Heart right ventricle (tissue), 16 donors: ENCODE measurements at regions of chr1 and their contacts with region 1.

Region 1: DNA sequence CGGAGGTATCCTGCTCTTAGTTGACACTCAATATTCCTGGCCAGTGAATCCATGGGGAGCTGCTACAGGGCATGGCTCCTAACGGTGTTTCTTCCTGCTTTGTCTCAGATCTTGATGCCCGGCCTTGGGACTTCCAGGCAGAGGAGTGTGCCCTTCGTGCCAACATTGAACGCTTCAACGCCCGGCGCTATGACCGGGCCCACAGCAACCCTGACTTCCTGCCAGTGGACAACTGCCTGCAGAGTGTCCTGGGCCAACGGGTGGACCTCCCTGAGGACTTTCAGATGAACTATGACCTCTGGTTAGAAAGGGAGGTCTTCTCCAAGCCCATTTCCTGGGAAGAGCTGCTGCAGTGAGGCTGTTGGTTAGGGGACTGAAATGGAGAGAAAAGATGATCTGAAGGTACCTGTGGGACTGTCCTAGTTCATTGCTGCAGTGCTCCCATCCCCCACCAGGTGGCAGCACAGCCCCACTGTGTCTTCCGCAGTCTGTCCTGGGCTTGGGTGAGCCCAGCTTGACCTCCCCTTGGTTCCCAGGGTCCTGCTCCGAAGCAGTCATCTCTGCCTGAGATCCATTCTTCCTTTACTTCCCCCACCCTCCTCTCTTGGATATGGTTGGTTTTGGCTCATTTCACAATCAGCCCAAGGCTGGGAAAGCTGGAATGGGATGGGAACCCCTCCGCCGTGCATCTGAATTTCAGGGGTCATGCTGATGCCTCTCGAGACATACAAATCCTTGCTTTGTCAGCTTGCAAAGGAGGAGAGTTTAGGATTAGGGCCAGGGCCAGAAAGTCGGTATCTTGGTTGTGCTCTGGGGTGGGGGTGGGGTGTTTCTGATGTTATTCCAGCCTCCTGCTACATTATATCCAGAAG is 16.7 kb downstream of the ALX3 start:
- DNase-seq: peak; percentile 62 to 75
- ATAC-seq: peak; percentile 57 to 82 (median 76)
- H3K4me3 ChIP-seq: no peak overlapping the region
- H3K27ac ChIP-seq: no peak overlapping the region
- H3K4me1 ChIP-seq: peaks cover 0 to 48% (median 19%) of the 10 kb centered on the region in 9 donors
- H3K27me3 ChIP-seq: no peaks in the 10 kb centered on the region
- CTCF ChIP-seq: peak; percentile 92 to 98 (median 96)

Region 2: DNA sequence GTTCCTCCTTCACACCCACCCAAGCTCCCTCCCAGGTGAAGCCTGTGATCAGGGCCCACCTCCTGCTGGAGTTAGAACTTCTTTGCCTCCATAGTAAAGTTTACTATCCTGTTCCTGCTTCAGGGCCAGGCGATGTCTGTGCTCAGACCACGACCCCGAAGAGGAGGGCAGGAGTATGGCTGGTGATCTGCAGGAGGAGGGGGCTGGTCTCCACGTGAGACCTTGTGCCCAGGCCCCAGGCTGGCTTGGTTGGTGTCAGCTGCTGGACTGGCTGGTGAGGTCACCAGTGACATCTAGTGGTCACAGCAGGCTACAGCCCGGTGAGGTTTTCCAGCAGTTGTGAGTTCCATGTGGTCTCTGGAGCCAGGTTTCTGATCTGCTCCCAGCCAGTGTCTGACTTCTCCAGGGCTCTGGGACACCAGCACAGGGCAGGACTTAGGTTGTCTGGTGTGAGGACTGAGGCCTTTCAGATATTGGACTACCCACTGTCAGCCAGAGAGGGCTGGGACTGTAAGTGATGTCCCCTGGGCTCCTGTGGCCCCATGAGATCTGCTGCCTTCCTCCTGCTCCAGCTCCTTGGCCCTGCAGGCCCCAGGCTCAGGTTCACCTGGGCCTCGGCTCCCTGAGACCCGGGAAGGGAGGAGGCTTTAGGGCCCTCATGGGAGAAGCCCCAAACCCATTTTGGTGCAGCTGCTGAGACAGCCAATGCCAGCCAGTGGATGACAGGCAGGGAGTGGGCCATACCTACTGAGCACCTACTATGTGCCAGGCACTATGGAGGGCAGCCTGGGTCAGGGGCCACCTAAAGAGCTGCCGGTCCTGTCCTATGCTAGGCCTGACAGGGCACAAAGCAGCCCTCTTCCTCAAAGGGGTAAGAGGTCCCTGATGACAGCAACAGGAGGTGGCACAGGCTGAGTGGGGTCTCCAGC is 52.5 kb after region 1 on chr1:
- intact Hi-C with region 1: loop called in 9 of 10 experiments (anchors 1 to 5 kb)
- DNase-seq: peak; percentile 52 to 69
- ATAC-seq: peak; percentile 50 to 86 (median 84)
- H3K4me3 ChIP-seq: no peak overlapping the region
- H3K27ac ChIP-seq: no peak overlapping the region
- H3K4me1 ChIP-seq: peaks cover 0 to 18% (median 8%) of the 10 kb centered on the region in 9 donors
- H3K27me3 ChIP-seq: peaks cover 0 to 15% (median 0%) of the 10 kb centered on the region in 7 donors
- CTCF ChIP-seq: peak; percentile 84 to 97 (median 94)

Region 3: GRCh38 chr1:110118636-110119615 is 65.1 kb after region 1 on chr1:
- intact Hi-C with region 1: loop called in 2 of 10 experiments (anchors 5 kb)
- DNase-seq: no peak
- ATAC-seq: no peak
- H3K4me3 ChIP-seq: no peak overlapping the region
- H3K27ac ChIP-seq: no peak overlapping the region
- H3K4me1 ChIP-seq: no peaks in the 10 kb centered on the region
- H3K27me3 ChIP-seq: peaks cover 0 to 20% (median 9%) of the 10 kb centered on the region in 7 donors
- CTCF ChIP-seq: no peak

Region 4: DNA sequence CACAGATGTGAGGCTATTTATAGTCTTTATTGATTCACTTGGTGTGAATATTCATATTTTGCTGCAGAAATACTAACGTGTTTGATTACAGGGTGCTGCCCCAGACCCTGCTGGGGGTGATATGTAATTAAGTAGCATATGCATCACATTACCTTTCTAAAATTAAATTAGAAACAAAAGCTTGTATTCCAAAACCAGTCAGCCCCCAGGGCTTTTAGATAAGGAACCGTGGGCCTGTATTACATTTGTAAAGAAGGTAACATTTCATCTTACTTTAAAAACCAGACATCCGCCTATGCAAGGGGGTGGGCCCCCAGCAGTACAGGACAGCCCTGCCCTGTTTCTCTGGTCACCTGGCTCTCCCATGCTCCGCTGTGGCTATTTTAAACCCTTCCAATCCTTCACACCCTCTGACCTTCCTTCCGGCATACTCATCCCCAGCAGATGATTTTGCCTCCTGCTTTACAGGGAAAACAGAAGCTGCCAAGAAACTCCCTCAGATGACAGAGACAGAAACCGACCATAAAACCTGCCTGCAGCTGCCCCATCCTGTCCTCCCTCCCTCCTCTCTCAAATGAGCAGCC is 134.3 kb after region 1 on chr1:
- intact Hi-C with region 1: loop called in 1 of 10 experiments (anchors 10 kb)
- DNase-seq: peak in 1 of 2 donors; percentile 61
- ATAC-seq: peak; percentile 38 to 88 (median 65)
- H3K4me3 ChIP-seq: no peak overlapping the region
- H3K27ac ChIP-seq: peak overlapping the region in 9 of 10 donors; percentile 32 to 92 (median 67)
- H3K4me1 ChIP-seq: peaks cover 0 to 59% (median 30%) of the 10 kb centered on the region in 9 donors
- H3K27me3 ChIP-seq: no peaks in the 10 kb centered on the region
- CTCF ChIP-seq: no peak